Endothelial cell of umbilical vein (primary cell): ENCODE measurements at regions of chr12 and their contacts with region 1.

Region 1: GRCh38 chr12:14995583-14996425 is 23.0 kb downstream of the PDE6H start:
- DNase-seq: peak; percentile 81
- H3K4me3 ChIP-seq: no peak overlapping the region
- H3K27ac ChIP-seq: no peak overlapping the region
- H3K4me1 ChIP-seq: no peaks in the 10 kb centered on the region
- H3K27me3 ChIP-seq: peaks cover 0 to 1% of the 10 kb centered on the region in 2 experiments
- CTCF ChIP-seq: peak; percentile 18 to 34
- POLR2A ChIP-seq: no peak

Region 2: DNA sequence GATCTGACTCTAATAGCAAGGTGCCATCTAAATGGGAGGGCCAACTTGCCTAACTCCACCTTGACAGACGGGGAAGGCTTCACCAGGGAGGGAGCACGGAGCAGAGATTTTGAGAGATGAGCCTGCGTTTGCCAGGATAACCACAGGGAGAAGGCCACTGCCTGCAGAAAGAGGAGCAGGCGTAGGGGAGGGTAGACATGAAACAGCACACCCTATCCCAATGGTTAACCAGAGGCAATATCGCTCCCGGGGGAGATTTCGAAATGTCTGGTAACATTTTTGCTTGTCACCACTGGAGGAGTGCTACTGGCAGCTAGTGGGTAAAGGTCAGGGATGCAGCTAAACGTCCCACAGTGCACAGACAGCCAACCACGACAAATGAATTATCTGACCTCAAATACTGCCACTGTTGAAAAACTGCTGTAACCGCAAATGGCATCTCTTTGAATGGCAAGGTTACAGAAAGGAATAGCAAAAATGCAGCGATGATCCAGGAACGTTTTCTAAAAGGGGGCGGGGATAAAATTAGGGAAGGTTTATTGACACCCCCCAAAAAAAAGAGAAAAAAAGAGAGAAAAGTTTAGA is 756.4 kb before region 1 on chr12:
- CTCF ChIA-PET with region 1: interaction called, 11 read pairs
- POLR2A ChIA-PET with region 1: no interaction called
- dilution Hi-C with region 1: no loop called
- intact Hi-C with region 1: no loop called
- DNase-seq: no peak
- H3K4me3 ChIP-seq: no peak overlapping the region
- H3K27ac ChIP-seq: no peak overlapping the region
- H3K4me1 ChIP-seq: no peaks in the 10 kb centered on the region
- H3K27me3 ChIP-seq: no peaks in the 10 kb centered on the region
- CTCF ChIP-seq: no peak
- POLR2A ChIP-seq: no peak

Region 3: GRCh38 chr12:14723763-14724162 is 272.0 kb before region 1 on chr12:
- CTCF ChIA-PET with region 1: interaction called, 34 read pairs
- POLR2A ChIA-PET with region 1: no interaction called
- dilution Hi-C with region 1: no loop called
- intact Hi-C with region 1: loop called (anchors 1 kb)
- DNase-seq: peak; percentile 56
- H3K4me3 ChIP-seq: no peak overlapping the region
- H3K27ac ChIP-seq: no peak overlapping the region
- H3K4me1 ChIP-seq: no peaks in the 10 kb centered on the region
- H3K27me3 ChIP-seq: peaks cover 0 to 2% of the 10 kb centered on the region in 2 experiments
- CTCF ChIP-seq: peak; percentile 57 to 75
- POLR2A ChIP-seq: no peak

Region 4: DNA sequence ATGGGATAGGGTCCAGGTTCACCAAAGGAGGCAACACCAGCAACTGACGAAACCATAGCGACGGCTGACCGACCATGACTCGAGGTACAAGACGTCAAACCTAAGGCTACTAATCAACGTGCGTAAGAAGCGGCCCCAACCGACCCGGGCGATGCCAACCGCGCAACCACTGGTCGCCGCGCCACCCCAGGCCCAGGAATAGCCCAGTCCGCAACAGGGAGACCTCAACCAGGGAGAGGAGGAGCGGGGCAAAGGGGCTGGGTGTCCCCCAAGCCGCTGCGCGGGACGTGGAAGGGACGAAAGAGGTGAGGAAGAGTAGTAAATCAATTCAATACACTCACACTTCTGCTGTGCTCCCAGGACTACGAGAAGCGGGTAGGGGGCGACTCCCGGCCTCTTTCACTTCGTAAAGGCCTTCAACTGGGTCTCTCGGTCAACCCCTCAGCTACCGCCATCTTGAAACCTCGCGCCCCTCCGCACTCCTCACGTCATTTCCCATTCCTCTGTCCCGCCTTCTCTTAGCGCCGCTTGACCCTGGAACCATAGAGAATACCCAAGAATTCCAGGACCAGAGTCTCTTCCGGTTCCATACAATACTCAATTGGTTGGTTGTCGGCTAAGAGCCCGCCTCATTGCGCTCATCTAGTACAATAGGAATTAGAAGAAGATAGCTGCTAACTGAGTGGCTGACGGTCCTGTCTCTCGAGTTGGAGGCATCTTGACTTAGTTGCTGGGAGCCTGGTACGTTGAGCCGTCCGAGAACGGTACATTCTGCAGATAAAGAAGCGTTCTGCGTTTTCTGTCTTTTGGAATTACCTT is 192.6 kb before region 1 on chr12 and contains the starts of genes C12orf60 and WBP11:
- CTCF ChIA-PET with region 1: interaction called, 12 read pairs
- POLR2A ChIA-PET with region 1: no interaction called
- dilution Hi-C with region 1: no loop called
- intact Hi-C with region 1: no loop called
- DNase-seq: peak; percentile 99
- H3K4me3 ChIP-seq: peak within 1 kb of the TSS; percentile 82 to 98 (median 97)
- H3K27ac ChIP-seq: peak within 1 kb of the TSS; percentile 90
- H3K4me1 ChIP-seq: peaks cover 17% of the 10 kb centered on the region
- H3K27me3 ChIP-seq: no peaks in the 10 kb centered on the region
- CTCF ChIP-seq: no peak
- POLR2A ChIP-seq: peak; percentile 92
- total RNA-seq, gene C12orf60: 1.1 and 1.3 TPM in 2 replicates
- total RNA-seq, gene WBP11: 70.5 and 77.1 TPM in 2 replicates

Region 5: DNA sequence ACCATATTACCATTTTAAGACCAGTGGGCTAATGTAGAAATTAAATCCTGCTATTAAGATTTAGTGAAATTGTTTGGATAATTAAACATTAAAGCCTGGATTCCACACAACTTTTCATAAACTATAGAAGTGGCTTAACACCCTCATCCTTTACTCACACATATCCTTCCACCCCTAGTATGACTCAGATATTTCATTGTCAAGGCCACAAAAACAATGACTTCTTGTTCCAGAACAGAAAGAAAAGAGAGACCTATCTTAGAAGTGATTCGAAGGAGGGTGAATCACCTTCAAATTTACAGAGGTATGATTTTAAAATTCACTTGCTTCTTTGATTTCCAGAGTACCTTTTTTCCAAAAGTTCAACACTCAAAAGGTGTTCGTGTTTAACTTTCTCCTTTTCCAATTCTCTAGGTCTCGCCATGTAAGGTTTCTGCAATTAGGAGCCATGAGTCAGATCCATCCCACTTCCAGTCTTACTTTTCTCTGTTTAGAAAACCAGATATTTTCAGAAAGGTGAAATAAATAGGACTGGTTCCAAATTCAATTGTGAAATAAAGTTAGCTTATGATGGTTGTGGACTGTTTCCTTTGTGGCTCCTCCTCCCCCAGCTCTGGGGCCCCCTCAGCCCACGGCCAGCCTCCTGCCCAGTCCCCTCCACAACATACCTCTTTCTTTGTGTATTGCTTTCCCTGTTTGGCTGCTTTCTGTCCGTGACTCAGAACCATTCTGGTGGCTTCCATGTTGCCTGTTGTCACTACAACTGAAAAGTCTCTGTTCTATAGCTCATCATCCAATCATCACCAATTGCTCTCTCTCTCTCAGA is 85.5 kb before region 1 on chr12:
- CTCF ChIA-PET with region 1: no interaction called
- POLR2A ChIA-PET with region 1: no interaction called
- dilution Hi-C with region 1: no loop called
- intact Hi-C with region 1: loop called (anchors 1 kb)
- DNase-seq: peak; percentile 87
- H3K4me3 ChIP-seq: no peak overlapping the region
- H3K27ac ChIP-seq: peak overlapping the region; percentile 69
- H3K4me1 ChIP-seq: peaks cover 27% of the 10 kb centered on the region
- H3K27me3 ChIP-seq: no peaks in the 10 kb centered on the region
- CTCF ChIP-seq: no peak
- POLR2A ChIP-seq: peak; percentile 32

Region 6: GRCh38 chr12:14948672-14949071 is 47.1 kb before region 1 on chr12:
- CTCF ChIA-PET with region 1: interaction called, 3 read pairs
- POLR2A ChIA-PET with region 1: no interaction called
- dilution Hi-C with region 1: no loop called
- intact Hi-C with region 1: loop called (anchors 2 kb)
- DNase-seq: peak; percentile 93
- H3K4me3 ChIP-seq: peak overlapping the region in 1 of 3 experiments; percentile 36
- H3K27ac ChIP-seq: peak overlapping the region; percentile 94
- H3K4me1 ChIP-seq: peaks cover 72% of the 10 kb centered on the region
- H3K27me3 ChIP-seq: no peaks in the 10 kb centered on the region
- CTCF ChIP-seq: no peak
- POLR2A ChIP-seq: peak; percentile 82

Region 7: DNA sequence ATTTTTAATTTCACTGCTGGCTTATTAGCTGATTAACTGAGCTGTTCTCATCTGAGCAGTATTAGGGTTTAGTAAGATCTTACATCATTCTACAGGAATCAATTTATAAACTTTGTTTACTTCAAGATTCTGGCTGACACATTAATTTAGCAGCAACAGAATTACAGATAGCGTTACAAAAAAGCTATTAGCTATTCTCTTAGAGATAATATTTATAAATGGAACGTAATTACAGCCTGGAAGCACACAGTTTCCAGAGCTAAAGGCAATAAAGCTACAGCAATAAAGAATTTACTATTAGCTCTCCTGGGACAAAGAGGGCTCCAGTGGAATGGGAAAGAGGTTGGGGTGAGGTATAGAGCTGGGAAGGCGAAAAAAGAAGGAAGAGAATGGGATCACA is 11.7 kb after region 1 on chr12:
- CTCF ChIA-PET with region 1: interaction called, 10 read pairs
- POLR2A ChIA-PET with region 1: no interaction called
- dilution Hi-C with region 1: no loop called
- intact Hi-C with region 1: no loop called
- DNase-seq: no peak
- H3K4me3 ChIP-seq: no peak overlapping the region
- H3K27ac ChIP-seq: no peak overlapping the region
- H3K4me1 ChIP-seq: no peaks in the 10 kb centered on the region
- H3K27me3 ChIP-seq: peaks cover 26 to 51% of the 10 kb centered on the region in 2 experiments
- CTCF ChIP-seq: no peak
- POLR2A ChIP-seq: no peak

Region 8: GRCh38 chr12:15122344-15122743 is 126.5 kb after region 1 on chr12:
- CTCF ChIA-PET with region 1: no interaction called
- POLR2A ChIA-PET with region 1: no interaction called
- dilution Hi-C with region 1: no loop called
- intact Hi-C with region 1: no loop called
- DNase-seq: no peak
- H3K4me3 ChIP-seq: no peak overlapping the region
- H3K27ac ChIP-seq: no peak overlapping the region
- H3K4me1 ChIP-seq: no peaks in the 10 kb centered on the region
- H3K27me3 ChIP-seq: peaks cover 0 to 3% of the 10 kb centered on the region in 2 experiments
- CTCF ChIP-seq: no peak
- POLR2A ChIP-seq: no peak